Sciatic nerve (tissue), 2 donors: ENCODE measurements at regions of chr22 and their contacts with region 1.

Region 1: GRCh38 chr22:25465949-25466348 is 98.5 kb upstream of the GRK3 start:
- DNase-seq: no peak
- ATAC-seq: no peak

Region 2: GRCh38 chr22:23533328-23533762 is 1932.6 kb before region 1 on chr22:
- intact Hi-C with region 1: no loop called
- DNase-seq: peak; percentile 55
- ATAC-seq: no peak

Region 3: DNA sequence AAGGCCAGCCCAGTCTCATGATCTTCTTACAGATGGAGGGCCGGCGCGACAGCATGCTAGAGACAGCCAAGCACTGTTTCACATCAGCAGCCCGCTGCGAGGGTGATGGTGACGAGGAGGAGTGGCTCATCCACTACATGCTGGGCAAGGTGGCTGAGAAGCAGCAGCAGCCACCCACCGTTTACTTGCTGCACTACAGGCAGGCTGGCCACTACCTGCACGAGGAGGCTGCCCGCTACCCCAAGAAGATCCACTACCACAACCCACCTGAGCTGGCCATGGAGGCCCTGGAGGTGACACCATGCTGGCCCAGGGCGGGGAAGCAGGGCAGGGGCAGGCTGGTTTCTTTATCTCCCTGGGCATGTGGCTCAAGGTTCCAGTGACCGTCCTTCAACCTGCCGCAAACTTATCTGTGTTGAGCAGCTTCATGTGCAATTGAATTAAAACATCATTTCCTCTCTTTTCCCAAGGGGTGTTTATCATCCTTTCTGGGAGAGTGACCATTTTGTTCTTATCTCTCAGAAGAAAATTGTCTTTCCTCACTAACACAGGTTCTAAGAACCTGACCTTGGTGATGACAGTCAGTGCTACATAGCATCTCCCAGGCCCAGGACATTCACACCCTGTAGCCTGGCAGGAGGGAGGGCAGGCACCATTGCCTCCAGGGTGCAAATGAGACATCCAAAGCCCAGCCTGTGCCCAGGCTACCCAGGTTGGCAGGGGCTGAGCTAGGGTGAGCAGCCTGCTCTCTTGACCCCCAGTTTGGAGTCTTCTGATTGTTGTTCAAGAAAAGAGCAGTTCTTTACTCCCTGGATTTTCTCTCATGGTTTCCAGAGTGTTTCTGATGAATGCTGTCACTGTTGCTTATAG is 1374.2 kb before region 1 on chr22:
- intact Hi-C with region 1: no loop called
- DNase-seq: peak; percentile 51
- ATAC-seq: no peak

Region 4: DNA sequence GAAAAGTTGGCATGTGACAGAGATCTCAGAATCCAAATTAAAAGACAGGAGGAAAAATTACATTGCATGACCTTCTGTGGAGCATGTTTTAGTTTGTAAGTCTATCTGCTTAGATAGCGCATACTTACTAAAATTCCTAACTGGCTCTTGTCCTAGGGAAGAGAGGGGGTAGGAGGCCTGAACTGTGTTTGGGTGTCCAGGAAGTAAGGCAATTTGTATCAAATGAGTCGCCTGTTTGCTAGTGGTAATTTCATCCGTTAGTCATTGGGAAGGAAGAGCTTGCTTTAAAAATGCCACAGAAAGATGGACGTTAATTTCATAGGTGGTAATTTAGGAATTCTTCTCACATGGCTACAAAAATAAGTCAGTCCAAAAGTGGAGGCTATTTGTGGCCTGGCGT is 117.0 kb after region 1 on chr22:
- intact Hi-C with region 1: no loop called
- DNase-seq: no peak
- ATAC-seq: no peak

Region 5: DNA sequence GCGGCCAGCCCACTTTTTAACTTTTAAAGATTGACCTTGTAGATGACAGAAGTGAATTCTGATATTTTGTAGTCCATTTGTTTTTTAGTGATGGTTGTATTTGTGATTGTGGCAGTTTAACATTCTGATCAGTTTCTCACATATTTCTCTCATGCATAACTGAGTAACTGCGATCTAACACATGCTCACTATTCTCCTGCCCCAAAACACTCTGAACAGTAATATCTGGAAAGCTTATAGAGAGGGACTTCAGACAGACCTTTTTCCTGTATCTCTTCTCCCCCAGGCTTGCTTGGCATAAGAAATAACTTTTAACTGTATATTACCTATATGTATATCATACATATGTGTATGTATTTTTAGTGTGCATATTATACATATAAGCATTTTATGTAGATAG is 238.8 kb after region 1 on chr22:
- intact Hi-C with region 1: loop called (anchors 2 kb)
- DNase-seq: no peak
- ATAC-seq: no peak